ENCODE measurements at regions of chr1 and their contacts with region 1.

Region 1: DNA sequence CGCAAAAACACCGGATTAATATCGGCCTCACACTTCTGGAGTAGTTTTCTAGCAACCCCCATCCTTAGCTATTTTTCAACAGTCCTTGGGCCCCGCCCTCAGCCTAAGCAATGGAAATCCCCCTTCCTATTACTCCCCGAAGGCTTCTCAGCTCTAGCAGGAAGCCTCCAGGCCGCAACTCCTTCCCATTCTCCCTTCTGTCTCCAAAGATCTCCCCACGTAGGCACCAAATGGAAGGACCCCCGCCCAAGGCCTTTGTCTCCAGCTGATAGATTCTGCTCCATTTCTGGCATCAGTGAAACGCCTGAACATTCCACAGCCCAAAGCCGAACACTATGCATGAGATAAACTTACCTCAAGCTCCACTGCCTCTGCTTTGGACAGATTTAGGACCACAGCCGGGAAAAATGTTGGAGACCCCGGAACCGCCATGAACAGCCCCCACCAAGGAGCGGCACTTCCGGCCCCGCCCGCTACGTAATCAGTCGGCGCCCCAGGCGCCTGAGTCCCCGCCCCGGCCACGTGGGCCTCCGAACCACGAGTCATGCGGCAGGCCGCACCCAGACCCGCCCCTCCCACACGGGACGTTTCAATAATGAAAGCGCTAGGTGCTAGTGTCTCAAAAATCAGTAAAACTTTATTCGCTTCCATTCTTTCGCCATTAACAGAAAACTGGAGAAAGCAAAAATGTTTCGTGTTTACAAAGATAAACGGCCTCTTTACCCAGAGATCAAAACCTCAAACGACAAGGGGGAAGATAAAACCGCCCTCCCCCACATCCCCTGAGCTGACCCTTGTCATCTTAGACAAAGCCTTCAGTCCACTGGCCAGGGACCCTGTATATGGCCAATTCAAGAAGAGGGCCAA is at the start of gene NRAS:
- DNase-seq: peak; percentile 95
- H3K4me3 ChIP-seq: peak within 1 kb of the TSS; percentile 94
- H3K27ac ChIP-seq: peak within 1 kb of the TSS; percentile 94
- H3K4me1 ChIP-seq: peaks cover 42% of the 10 kb centered on the region
- H3K27me3 ChIP-seq: no peaks in the 10 kb centered on the region
- CTCF ChIP-seq: no peak
- total RNA-seq, gene NRAS: 7.6 TPM

Region 2: GRCh38 chr1:114757455-114758250 is 41.1 kb after region 1 on chr1 and contains the start of gene CSDE1:
- intact Hi-C with region 1: loop called (anchors 5 kb)
- DNase-seq: peak; percentile 96
- H3K4me3 ChIP-seq: peak within 1 kb of the TSS; percentile 97
- H3K27ac ChIP-seq: peak within 1 kb of the TSS; percentile 99
- H3K4me1 ChIP-seq: peaks cover 58% of the 10 kb centered on the region
- H3K27me3 ChIP-seq: no peaks in the 10 kb centered on the region
- CTCF ChIP-seq: peak; percentile 53
- total RNA-seq, gene CSDE1: 910 TPM

Measured in left ventricle myocardium inferior (tissue), 1 donor.